Body of pancreas (tissue), 4 donors: ENCODE measurements at regions of chrX and their contacts with region 1.

Region 1: GRCh38 chrX:110156167-110156754 is 153.3 kb downstream of the TMEM164 start:
- DNase-seq: no peak
- ATAC-seq: no peak
- H3K4me3 ChIP-seq: no peak overlapping the region
- H3K27ac ChIP-seq: no peak overlapping the region
- H3K4me1 ChIP-seq: peaks cover 6% of the 10 kb centered on the region
- H3K27me3 ChIP-seq: no peaks in the 10 kb centered on the region
- CTCF ChIP-seq: peak; percentile 31 to 60 (median 45)
- POLR2A ChIP-seq: no peak

Region 2: GRCh38 chrX:109635176-109635575 is 521.1 kb before region 1 on chrX:
- intact Hi-C with region 1: no loop called
- DNase-seq: no peak
- ATAC-seq: no peak
- H3K4me3 ChIP-seq: no peak overlapping the region
- H3K27ac ChIP-seq: no peak overlapping the region
- H3K4me1 ChIP-seq: no peaks in the 10 kb centered on the region
- H3K27me3 ChIP-seq: no peaks in the 10 kb centered on the region
- CTCF ChIP-seq: peak; percentile 25 to 49 (median 37)
- POLR2A ChIP-seq: no peak

Region 3: GRCh38 chrX:110066488-110067225 is 89.6 kb before region 1 on chrX:
- intact Hi-C with region 1: no loop called
- DNase-seq: peak; percentile 74 to 86 (median 81)
- ATAC-seq: peak; percentile 92
- H3K4me3 ChIP-seq: no peak overlapping the region
- H3K27ac ChIP-seq: peak overlapping the region; percentile 69 to 79 (median 74)
- H3K4me1 ChIP-seq: peaks cover 31% of the 10 kb centered on the region
- H3K27me3 ChIP-seq: no peaks in the 10 kb centered on the region
- CTCF ChIP-seq: peak in 2 of 7 experiments; percentile 19 to 34
- POLR2A ChIP-seq: peak in 1 of 3 donors; percentile 13

Region 4: DNA sequence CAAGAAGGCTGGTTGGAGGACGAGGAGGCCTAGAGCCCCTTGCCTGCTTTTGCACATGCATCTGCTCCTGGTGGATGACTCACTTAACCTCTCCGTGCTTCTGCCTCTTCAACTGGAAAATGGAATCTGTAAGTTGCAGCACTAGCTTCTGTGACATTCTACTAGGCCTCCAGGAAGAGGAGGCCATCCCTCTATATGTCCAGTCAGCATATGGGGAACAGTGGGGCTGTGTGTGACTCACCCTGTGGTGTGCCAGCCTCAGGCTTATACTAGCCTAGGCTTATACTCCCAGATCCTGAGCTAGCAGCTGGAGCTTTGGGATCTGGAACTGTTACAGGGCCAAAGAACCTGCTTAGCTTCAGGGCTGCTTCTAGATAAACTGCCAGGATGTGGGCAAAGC is 238.4 kb after region 1 on chrX:
- intact Hi-C with region 1: no loop called
- DNase-seq: no peak
- ATAC-seq: no peak
- H3K4me3 ChIP-seq: no peak overlapping the region
- H3K27ac ChIP-seq: no peak overlapping the region
- H3K4me1 ChIP-seq: no peaks in the 10 kb centered on the region
- H3K27me3 ChIP-seq: no peaks in the 10 kb centered on the region
- CTCF ChIP-seq: no peak
- POLR2A ChIP-seq: no peak

Region 5: DNA sequence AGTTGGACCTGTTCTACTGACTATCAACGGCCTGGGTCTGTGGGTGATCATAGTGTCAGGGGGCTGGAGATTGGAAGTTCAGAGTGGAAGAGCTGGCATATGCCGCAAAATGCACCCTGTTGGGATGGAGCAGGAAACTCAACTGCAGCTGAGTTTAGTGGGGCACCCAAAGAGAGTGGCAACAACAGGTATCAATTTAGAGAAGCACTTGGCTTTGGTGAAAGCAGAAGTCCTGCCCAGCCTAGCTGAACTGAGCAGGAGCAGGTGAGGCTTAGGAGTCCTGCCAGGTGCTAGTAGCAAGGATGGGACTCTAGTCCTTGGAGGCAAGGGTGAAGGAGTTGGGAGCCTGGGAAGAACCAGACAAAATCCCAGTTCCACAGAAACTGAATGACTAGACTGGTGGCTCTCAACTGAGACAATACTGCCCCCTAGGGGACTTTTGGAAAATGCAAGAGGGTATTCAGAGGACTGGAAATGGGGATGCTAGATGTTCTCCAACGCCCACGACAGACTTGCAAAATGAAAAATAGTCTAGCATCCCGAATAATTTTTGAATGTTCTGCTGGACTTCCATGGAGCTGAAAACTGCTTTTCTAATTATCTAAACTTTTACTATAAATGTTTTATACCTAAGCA is 251.8 kb after region 1 on chrX:
- intact Hi-C with region 1: loop called (anchors 5 kb)
- DNase-seq: peak; percentile 40 to 68 (median 62)
- ATAC-seq: peak; percentile 77
- H3K4me3 ChIP-seq: no peak overlapping the region
- H3K27ac ChIP-seq: no peak overlapping the region
- H3K4me1 ChIP-seq: no peaks in the 10 kb centered on the region
- H3K27me3 ChIP-seq: no peaks in the 10 kb centered on the region
- CTCF ChIP-seq: peak; percentile 48 to 83 (median 64)
- POLR2A ChIP-seq: no peak

Region 6: GRCh38 chrX:110600745-110601310 is 444.6 kb after region 1 on chrX:
- intact Hi-C with region 1: no loop called
- DNase-seq: no peak
- ATAC-seq: no peak
- H3K4me3 ChIP-seq: no peak overlapping the region
- H3K27ac ChIP-seq: no peak overlapping the region
- H3K4me1 ChIP-seq: no peaks in the 10 kb centered on the region
- H3K27me3 ChIP-seq: no peaks in the 10 kb centered on the region
- CTCF ChIP-seq: no peak
- POLR2A ChIP-seq: no peak